ENCODE measurements at regions of chr11 and their contacts with region 1.

Region 1: GRCh38 chr11:86740709-86741483 is 59.4 kb upstream of the PRSS23 start:
- DNase-seq: peak; percentile 69 to 96
- H3K4me3 ChIP-seq: peak overlapping the region; percentile 7; the same call in 1 of the 2 replicates
- H3K27ac ChIP-seq: peak overlapping the region; percentile 97
- H3K4me1 ChIP-seq: peaks cover 98% of the 10 kb centered on the region
- H3K27me3 ChIP-seq: no peaks in the 10 kb centered on the region
- CTCF ChIP-seq: no peak

Region 2: DNA sequence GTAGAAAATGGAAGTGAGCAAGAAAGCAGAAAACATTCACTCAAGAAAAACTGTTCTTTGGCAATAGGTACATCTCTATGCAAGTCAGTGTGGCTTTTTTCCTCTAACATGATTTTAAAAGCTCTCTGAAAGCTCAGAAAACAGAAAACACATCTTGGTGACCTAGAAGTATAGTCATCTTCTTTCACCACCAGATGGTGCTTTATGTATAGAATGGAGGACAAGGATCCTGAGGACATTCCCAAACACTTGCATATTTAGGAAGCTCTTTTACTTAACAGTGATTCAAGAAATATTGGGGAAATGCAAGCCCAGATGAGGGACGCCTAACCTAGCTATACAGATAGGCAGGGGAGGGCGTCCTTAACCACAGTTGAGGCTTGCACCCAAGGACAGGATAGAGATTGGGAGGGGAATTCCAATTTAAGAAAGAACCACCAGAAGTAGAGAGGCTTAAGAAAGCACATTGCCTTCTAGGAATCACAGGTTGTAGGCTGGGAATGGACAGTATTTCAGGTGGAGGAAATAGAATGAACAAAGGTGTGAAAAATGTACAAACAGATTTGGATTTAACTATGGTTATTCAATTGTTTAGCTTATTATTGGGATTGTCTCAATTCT is 380.0 kb before region 1 on chr11:
- CTCF ChIA-PET with region 1: interaction called, 8 read pairs
- POLR2A ChIA-PET with region 1: no interaction called
- intact Hi-C with region 1: loop called (anchors 5 kb)
- DNase-seq: peak in 1 of 2 experiments; percentile 65
- H3K4me3 ChIP-seq: no peak overlapping the region
- H3K27ac ChIP-seq: no peak overlapping the region
- H3K4me1 ChIP-seq: no peaks in the 10 kb centered on the region
- H3K27me3 ChIP-seq: no peaks in the 10 kb centered on the region
- CTCF ChIP-seq: peak; percentile 77

Region 3: DNA sequence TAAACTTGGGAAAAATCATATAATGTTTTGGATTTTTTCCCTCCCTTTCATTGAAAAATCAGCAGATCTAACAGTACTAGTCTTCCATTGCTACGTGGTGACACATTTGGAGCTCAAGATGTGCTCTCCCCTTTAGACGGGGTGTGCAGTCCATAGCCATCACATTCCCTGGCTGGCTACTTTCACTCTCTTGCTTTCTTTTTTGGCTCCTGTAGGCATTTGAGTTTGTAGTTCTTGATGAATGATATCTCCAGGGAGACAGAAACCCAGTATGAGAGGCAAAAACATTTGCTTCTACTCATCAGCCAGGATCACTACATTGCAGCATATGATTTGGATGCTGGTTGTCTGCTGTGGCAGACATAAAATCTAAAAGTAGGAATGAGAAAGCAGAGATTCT is 354.1 kb before region 1 on chr11:
- CTCF ChIA-PET with region 1: no interaction called
- POLR2A ChIA-PET with region 1: no interaction called
- intact Hi-C with region 1: no loop called
- DNase-seq: no peak
- H3K4me3 ChIP-seq: no peak overlapping the region
- H3K27ac ChIP-seq: no peak overlapping the region
- H3K4me1 ChIP-seq: no peaks in the 10 kb centered on the region
- H3K27me3 ChIP-seq: no peaks in the 10 kb centered on the region
- CTCF ChIP-seq: no peak

Region 4: DNA sequence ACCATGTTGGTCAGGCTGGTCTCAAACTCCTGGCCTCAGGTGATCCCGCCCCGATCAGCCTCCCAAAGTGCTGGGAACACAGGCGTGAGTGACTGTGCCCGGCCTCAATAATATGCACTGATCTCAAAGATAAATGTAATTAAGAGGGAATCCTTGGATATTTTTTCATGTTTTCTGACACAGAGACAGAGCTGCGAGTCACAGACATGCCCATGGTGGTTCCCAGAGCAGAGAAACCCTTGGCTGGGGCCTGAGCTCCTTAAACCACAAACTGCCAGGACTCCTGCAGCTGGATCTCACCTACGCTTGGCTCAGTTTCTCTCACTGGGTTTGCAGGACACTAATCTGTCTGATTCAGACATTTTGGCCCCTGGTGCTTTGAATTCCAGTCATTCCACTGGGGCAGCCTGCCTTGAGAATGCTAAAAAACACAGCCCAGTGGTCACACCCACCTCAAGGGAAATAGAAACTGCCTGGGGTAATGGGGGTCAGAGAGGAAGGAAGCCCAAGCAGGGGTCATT is 243.7 kb before region 1 on chr11:
- CTCF ChIA-PET with region 1: no interaction called
- POLR2A ChIA-PET with region 1: no interaction called
- intact Hi-C with region 1: loop called (anchors 1 kb)
- DNase-seq: peak; percentile 81 to 96
- H3K4me3 ChIP-seq: no peak overlapping the region
- H3K27ac ChIP-seq: peak overlapping the region; percentile 91
- H3K4me1 ChIP-seq: peaks cover 55% of the 10 kb centered on the region
- H3K27me3 ChIP-seq: no peaks in the 10 kb centered on the region
- CTCF ChIP-seq: no peak

Region 5: GRCh38 chr11:86535773-86536172 is 205.1 kb before region 1 on chr11:
- CTCF ChIA-PET with region 1: no interaction called
- POLR2A ChIA-PET with region 1: no interaction called
- intact Hi-C with region 1: no loop called
- DNase-seq: no peak
- H3K4me3 ChIP-seq: no peak overlapping the region
- H3K27ac ChIP-seq: no peak overlapping the region
- H3K4me1 ChIP-seq: peaks cover 4% of the 10 kb centered on the region; the same call in 1 of the 2 replicates
- H3K27me3 ChIP-seq: no peaks in the 10 kb centered on the region
- CTCF ChIP-seq: no peak

Region 6: GRCh38 chr11:86632499-86633269 is 108.2 kb before region 1 on chr11:
- CTCF ChIA-PET with region 1: no interaction called
- POLR2A ChIA-PET with region 1: no interaction called
- intact Hi-C with region 1: loop called (anchors 1 kb)
- DNase-seq: peak; percentile 83 to 96
- H3K4me3 ChIP-seq: no peak overlapping the region
- H3K27ac ChIP-seq: peak overlapping the region; percentile 74
- H3K4me1 ChIP-seq: peaks cover 19% of the 10 kb centered on the region
- H3K27me3 ChIP-seq: no peaks in the 10 kb centered on the region
- CTCF ChIP-seq: peak; percentile 52

Region 7: DNA sequence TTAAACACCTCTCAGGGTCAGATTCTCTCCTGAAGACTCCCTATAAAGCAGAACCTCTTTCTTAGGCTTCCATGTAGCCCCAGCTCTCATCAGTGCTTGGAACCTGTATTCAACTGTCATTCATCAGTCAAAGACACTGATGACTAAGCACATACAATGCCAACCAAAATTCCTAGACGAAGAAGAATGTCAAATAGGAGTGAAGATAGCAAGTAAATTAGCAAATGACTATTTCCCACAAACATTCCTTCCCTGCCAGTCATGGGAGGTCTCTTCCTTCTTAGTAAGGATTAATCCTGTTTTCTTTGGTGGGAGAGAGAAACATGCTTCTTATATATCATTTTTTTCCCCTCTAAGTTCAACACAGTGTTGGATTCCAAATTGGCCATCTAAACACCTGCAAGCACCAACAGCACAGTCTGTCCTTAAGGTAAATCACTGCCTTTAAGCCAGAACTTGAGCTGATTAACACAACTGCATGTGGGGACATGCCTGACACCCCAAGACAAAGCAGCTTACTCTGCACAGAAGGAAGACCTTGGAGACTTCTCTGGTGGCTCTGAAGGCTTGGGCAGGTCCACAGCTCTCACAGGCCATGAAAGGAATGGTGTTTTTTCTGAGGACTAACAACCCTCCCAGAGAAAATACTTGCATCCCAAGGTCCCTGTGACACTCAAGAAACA is 21.0 kb before region 1 on chr11:
- CTCF ChIA-PET with region 1: no interaction called
- POLR2A ChIA-PET with region 1: no interaction called
- intact Hi-C with region 1: loop called (anchors 2 kb)
- DNase-seq: peak; percentile 38 to 99
- H3K4me3 ChIP-seq: no peak overlapping the region
- H3K27ac ChIP-seq: peak overlapping the region; percentile 79
- H3K4me1 ChIP-seq: peaks cover 45% of the 10 kb centered on the region
- H3K27me3 ChIP-seq: no peaks in the 10 kb centered on the region
- CTCF ChIP-seq: no peak

Region 8: GRCh38 chr11:86919557-86920210 is 178.8 kb after region 1 on chr11:
- CTCF ChIA-PET with region 1: no interaction called
- POLR2A ChIA-PET with region 1: no interaction called
- intact Hi-C with region 1: loop called (anchors 5 kb)
- DNase-seq: peak; percentile 38 to 65
- H3K4me3 ChIP-seq: no peak overlapping the region
- H3K27ac ChIP-seq: no peak overlapping the region
- H3K4me1 ChIP-seq: peaks cover 23% of the 10 kb centered on the region
- H3K27me3 ChIP-seq: no peaks in the 10 kb centered on the region
- CTCF ChIP-seq: peak; percentile 86

Region 9: GRCh38 chr11:87203907-87204602 is 463.2 kb after region 1 on chr11:
- CTCF ChIA-PET with region 1: no interaction called
- POLR2A ChIA-PET with region 1: no interaction called
- intact Hi-C with region 1: no loop called
- DNase-seq: no peak
- H3K4me3 ChIP-seq: no peak overlapping the region
- H3K27ac ChIP-seq: no peak overlapping the region
- H3K4me1 ChIP-seq: no peaks in the 10 kb centered on the region
- H3K27me3 ChIP-seq: no peaks in the 10 kb centered on the region
- CTCF ChIP-seq: no peak

Measured in PC-9 (cell line).